ENCODE measurements at regions of chr3 and their contacts with region 1.

Region 1: GRCh38 chr3:125141596-125142419 is 70.7 kb downstream of the SLC12A8 start:
- DNase-seq: peak; percentile 83 to 92 (median 92)
- ATAC-seq: peak; percentile 86 to 87
- H3K4me3 ChIP-seq: peak overlapping the region; percentile 23
- H3K27ac ChIP-seq: peak overlapping the region; percentile 62
- H3K4me1 ChIP-seq: peaks cover 20% of the 10 kb centered on the region
- H3K27me3 ChIP-seq: no peaks in the 10 kb centered on the region

Region 2: GRCh38 chr3:125003369-125003853 is 138.4 kb before region 1 on chr3:
- intact Hi-C with region 1: loop called in 1 of 4 experiments (anchors 10 kb)
- DNase-seq: peak; percentile 62 to 87 (median 82)
- ATAC-seq: peak; percentile 84 to 91
- H3K4me3 ChIP-seq: no peak overlapping the region
- H3K27ac ChIP-seq: peak overlapping the region; percentile 14
- H3K4me1 ChIP-seq: peaks cover 13% of the 10 kb centered on the region
- H3K27me3 ChIP-seq: no peaks in the 10 kb centered on the region

Region 3: GRCh38 chr3:125042725-125043406 is 98.9 kb before region 1 on chr3:
- intact Hi-C with region 1: loop called in 1 of 4 experiments (anchors 5 kb)
- DNase-seq: peak; percentile 66 to 83 (median 82)
- ATAC-seq: peak; percentile 67 to 77
- H3K4me3 ChIP-seq: no peak overlapping the region
- H3K27ac ChIP-seq: peak overlapping the region; percentile 94
- H3K4me1 ChIP-seq: peaks cover 56% of the 10 kb centered on the region
- H3K27me3 ChIP-seq: no peaks in the 10 kb centered on the region

Measured in right cardiac atrium (tissue), 5 donors.